A549 (cell line): ENCODE measurements at regions of chr1 and their contacts with region 1.

Region 1: GRCh38 chr1:6489799-6490180 is 1.7 kb downstream of the PLEKHG5 start:
- DNase-seq: peak; percentile 66 to 77
- ATAC-seq: peak; percentile 66 to 87
- H3K4me3 ChIP-seq: peak overlapping the region; percentile 94
- H3K27ac ChIP-seq: peak overlapping the region; percentile 99
- H3K4me1 ChIP-seq: peaks cover 23% of the 10 kb centered on the region
- CTCF ChIP-seq: peak; percentile 78
- EP300 ChIP-seq: no peak
- POLR2A ChIP-seq: 0 out of 2 replicates have a peak, but pooled peaks have one; percentile 5
- RAD21 ChIP-seq: peak; percentile 51 to 54

Region 2: GRCh38 chr1:6466023-6466422 is 23.8 kb before region 1 on chr1 and contains the start of gene TNFRSF25:
- CTCF ChIA-PET with region 1: interaction called, 11 read pairs
- POLR2A ChIA-PET with region 1: no interaction called
- DNase-seq: no peak
- ATAC-seq: no peak
- H3K4me3 ChIP-seq: no peak within 1 kb of the TSS
- H3K27ac ChIP-seq: no peak within 1 kb of the TSS
- H3K4me1 ChIP-seq: no peaks in the 10 kb centered on the region; the same call in 2 of the 3 replicates
- CTCF ChIP-seq: no peak
- EP300 ChIP-seq: no peak
- POLR2A ChIP-seq: no peak
- RAD21 ChIP-seq: no peak
- polyA plus RNA-seq, gene TNFRSF25: 0.65 and 0.85 TPM in 2 replicates

Region 3: DNA sequence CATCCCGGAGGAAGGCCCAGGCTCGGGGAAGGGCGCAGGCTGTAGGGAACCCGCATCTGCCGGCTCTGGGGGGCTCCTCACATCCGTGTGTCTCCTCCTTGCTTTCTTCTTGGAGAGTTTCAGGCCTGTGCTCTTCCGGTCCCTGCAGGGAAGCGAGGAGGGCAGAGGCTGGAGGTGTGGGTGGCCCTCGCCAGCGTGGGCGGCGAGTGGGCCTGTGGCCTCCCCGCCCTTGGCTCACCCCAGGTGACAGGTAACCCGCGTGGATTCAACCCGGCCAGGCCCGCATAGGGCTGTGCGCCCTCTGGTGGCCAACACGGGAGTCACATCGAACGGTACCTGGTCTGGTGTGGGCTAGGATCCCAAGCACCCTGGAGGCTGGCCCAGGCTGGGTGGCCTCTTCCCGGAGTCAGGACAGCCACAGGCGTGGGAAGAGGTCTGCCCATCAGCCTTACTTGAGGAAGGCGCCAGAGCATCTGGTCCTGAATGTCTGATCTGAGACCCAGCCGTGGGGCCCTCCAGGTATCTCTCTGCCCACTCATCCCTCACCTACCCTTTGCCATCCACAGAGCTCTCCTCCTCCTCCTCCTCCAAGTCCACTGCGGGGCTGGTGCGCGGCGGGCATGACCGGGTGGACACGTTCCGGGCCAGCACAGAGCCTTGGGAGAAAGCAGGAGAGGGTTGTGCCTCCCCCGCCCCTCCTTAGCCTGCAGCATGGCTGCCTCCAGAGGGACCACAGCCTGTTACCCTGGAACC is 14.2 kb before region 1 on chr1:
- CTCF ChIA-PET with region 1: interaction called, 35 read pairs
- POLR2A ChIA-PET with region 1: no interaction called
- DNase-seq: peak in 1 of 2 experiments; percentile 73
- ATAC-seq: peak; percentile 82 to 93
- H3K4me3 ChIP-seq: no peak overlapping the region
- H3K27ac ChIP-seq: no peak overlapping the region
- H3K4me1 ChIP-seq: peaks cover 7% of the 10 kb centered on the region; the same call in 1 of the 3 replicates
- CTCF ChIP-seq: peak; percentile 72
- EP300 ChIP-seq: no peak
- POLR2A ChIP-seq: no peak
- RAD21 ChIP-seq: peak; percentile 30 to 35; a peak in 2 of 5 replicates

Region 4: DNA sequence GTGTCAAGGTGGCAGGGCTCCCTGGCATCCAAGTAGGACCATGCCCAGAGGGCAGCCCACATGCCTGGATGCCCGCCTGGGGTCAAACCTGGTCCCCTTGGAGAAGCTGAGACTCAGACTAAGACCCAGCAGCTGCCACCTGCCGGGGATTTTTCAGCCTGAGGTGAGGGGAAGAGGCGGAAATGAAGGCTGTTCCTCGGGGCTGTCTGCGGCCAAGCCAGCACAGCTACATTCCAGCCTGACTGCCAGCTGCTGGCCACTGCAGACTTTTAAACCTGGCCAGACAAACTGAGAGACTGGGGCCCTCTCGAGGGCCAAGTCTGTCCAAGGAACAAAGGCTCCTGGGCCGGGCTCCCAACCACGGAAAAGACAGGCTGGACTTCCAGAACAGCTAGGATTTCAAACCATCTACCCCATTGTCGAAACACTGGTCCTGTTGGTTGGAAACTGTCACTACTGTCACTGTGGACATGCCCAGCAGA is 23.6 kb after region 1 on chr1:
- CTCF ChIA-PET with region 1: interaction called, 12 read pairs
- POLR2A ChIA-PET with region 1: no interaction called
- DNase-seq: no peak
- ATAC-seq: no peak
- H3K4me3 ChIP-seq: no peak overlapping the region
- H3K27ac ChIP-seq: no peak overlapping the region
- H3K4me1 ChIP-seq: no peaks in the 10 kb centered on the region
- CTCF ChIP-seq: no peak
- EP300 ChIP-seq: no peak
- POLR2A ChIP-seq: no peak
- RAD21 ChIP-seq: no peak

Region 5: DNA sequence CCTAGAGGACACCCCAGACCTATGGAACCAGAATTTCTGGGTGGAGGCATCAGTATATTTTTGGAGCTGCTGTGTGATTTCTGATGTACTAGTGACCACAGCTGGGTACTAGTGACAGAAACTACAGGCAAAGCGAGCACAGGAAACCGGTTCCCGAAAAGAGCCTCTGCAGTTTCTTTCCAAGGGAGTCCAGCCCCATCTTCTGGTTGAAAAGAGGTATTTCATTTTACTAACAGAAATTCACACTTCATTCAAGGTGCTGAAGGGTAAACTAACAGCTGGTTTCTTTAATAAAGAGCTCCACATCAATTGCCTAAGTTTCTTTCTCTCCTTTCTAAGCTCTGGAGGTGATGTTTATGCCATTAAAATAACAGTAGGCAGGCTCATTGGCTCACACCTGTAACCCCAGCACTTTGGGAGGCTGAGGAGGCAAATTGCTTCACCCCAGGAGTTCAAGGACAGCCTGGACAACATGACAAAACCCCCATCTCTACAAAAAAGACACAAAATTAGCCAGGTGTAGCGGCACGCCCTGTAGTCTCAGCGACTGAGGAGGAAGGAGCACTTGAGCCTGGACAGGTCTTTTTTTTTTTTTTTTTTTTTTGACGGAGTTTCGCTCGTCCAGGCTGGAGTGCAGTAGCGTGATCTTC is 156.8 kb after region 1 on chr1:
- CTCF ChIA-PET with region 1: interaction called, 14 read pairs
- POLR2A ChIA-PET with region 1: no interaction called
- DNase-seq: peak; percentile 28 to 31
- ATAC-seq: peak; percentile 63 to 75; a peak in 4 of 6 replicates
- H3K4me3 ChIP-seq: no peak overlapping the region
- H3K27ac ChIP-seq: no peak overlapping the region
- H3K4me1 ChIP-seq: no peaks in the 10 kb centered on the region
- CTCF ChIP-seq: peak; percentile 49
- EP300 ChIP-seq: no peak
- POLR2A ChIP-seq: no peak
- RAD21 ChIP-seq: peak; percentile 41 to 60; a peak in 4 of 5 replicates